Right ventricle myocardium superior (tissue), 1 donor: ENCODE measurements at regions of chr20 and their contacts with region 1.

Region 1: DNA sequence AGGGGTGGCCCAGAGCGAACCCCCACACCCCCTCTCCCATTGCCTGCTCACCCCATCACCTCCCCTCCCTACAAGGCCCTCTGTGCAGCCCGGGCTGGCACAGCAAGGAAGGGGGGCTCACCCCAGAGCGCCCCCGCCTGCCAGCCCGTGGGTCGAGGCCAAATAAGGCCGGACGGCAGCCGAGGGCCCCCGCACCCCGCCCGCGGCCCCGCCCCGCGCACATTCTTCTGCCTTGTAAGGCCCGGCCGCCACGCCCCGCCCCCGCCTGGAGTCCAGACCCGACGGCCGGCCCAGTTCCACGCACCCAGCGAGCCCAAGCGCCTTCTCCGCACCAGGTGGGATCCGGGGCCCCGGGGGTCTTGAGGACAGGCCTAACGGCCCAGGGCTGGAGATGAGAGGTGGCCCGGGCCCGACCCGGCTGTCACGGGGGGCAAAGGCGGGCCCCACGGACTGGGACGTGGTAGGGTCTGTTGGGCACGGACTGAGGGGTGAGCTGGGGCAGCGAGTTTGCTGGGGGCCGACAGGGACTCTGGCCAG is at the start of gene MYL9:
- DNase-seq: peak; percentile 96
- ATAC-seq: peak; percentile 91
- total RNA-seq, gene MYL9: 1,602 TPM

Region 2: DNA sequence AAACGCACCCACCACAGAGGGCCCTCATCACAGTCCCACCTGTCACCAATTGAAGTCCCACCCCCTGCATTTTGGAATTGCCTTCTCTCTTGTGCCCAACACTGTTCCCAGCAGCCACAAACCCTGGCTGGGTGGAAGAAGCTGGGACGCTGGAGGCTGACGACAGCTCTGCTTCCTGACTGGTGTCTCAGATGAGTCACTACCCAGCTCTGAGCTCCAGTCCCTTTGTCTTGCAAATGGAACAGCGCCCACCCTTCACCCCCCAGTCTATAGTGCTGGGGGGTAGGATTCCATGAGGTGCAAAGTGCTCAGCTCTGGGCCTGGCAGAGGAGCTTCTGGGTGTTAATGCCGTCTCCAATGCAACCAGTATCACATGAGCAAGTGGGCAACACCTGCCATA is 149.8 kb before region 1 on chr20:
- intact Hi-C with region 1: no loop called
- DNase-seq: no peak
- ATAC-seq: no peak

Region 3: GRCh38 chr20:36460648-36461599 is 80.4 kb before region 1 on chr20:
- intact Hi-C with region 1: loop called (anchors 5 kb)
- DNase-seq: peak; percentile 96
- ATAC-seq: peak; percentile 78

Region 4: DNA sequence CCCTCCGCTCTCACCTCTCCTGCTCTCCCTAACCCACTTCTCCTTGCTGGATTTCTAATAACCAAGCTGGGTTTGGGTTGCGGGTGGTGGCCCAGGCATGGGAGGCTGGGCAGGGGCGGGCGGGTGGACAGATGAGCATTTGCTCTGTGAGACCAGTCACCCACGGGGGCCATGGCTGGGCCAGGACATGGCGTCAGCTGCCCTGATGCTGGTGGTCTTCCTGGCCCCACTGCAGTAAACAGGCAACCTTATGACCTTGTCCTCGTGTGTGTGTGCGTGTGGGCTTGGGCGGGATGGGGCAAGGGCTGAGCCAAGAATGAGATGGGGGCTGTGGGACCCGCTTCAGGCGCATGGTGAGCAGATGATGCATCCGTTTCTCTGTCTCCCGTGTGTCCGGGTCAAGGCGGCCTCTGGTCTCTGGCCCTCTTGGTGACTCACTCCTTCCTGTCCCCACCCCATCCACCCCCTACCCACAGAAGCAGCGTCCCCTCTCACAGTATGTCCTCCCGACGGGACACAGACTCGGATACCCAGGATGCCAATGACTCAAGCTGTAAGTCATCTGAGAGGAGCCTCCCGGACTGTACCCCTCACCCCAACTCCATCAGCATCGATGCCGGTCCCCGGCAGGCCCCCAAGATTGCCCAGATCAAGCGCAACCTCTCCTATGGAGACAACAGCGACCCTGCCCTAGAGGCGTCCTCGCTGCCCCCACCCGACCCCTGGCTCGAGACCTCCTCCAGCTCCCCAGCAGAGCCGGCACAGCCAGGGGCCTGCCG is 41.4 kb before region 1 on chr20:
- intact Hi-C with region 1: loop called (anchors 5 kb)
- DNase-seq: no peak
- ATAC-seq: no peak

Region 5: DNA sequence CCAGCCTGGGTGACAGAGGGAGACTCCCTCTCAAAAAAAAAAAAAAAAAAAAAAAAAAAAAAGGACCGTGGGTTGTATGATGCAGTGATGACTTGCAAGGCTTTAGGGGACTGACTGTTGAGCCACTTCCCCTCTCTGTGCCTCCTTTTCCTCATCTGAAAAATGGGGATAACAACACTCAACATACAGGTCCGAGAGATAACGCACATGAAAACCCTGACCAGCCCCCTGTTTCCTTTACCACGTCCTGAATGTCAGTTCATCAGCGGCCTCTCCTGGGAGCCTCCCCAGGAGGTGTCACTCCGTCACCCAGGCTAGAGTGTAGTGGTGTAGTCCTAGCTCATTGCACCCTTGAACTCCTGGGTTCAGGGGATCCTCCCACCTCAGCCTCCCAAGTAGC is 100.8 kb after region 1 on chr20:
- intact Hi-C with region 1: no loop called
- DNase-seq: no peak
- ATAC-seq: no peak